Psoas muscle (tissue), 8 donors: ENCODE measurements at regions of chr11 and their contacts with region 1.

Region 1: DNA sequence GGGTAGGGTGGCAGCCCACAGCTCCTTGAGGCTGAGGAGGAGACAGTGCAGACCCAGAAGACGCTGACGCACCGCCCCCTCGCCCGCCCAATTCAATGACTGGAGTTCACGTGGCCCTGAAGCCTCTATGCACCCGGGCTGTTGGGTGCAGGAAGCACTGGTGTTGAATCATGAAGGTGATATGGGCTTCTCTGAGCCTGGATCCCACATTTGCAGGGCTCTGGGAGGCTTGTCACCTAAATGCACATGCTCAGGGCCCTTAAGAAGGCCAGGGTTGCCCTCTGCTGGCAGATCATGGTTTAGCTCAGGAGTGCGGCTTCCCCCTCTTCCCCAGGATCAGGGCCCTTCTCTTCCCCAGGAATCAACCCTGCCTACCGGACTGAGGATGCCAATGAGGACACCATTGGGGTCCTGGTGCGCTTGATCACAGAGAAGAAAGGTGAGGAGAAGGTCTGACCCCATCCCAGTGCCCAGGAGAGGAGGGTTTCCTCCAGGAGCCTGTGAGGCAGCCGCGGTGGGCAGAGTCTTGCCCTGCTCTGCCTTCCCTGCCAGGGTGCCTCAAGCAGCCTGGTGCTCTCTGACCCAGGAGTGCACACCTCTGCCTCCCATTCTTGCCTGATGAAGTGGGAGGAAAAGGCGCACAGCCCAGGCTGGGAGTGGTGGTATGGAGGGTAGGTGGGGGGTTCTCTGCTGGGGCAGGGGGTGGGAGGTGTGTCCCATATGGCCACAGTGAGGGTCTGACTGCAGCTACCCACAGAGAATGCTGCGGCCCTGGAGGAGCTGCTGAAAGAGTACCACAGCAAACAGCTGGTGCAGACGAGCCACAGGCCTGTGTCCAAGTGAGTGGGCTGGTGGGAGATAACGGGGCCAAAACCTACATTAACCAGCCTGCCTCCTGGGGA is 17.5 kb downstream of the RELT start:
- DNase-seq: peak; percentile 74 to 87
- ATAC-seq: peak; percentile 65 to 83 (median 78)
- H3K4me3 ChIP-seq: no peak overlapping the region
- H3K27ac ChIP-seq: no peak overlapping the region
- H3K4me1 ChIP-seq: peaks cover 37% of the 10 kb centered on the region
- H3K27me3 ChIP-seq: no peaks in the 10 kb centered on the region
- CTCF ChIP-seq: peak; percentile 81

Region 2: DNA sequence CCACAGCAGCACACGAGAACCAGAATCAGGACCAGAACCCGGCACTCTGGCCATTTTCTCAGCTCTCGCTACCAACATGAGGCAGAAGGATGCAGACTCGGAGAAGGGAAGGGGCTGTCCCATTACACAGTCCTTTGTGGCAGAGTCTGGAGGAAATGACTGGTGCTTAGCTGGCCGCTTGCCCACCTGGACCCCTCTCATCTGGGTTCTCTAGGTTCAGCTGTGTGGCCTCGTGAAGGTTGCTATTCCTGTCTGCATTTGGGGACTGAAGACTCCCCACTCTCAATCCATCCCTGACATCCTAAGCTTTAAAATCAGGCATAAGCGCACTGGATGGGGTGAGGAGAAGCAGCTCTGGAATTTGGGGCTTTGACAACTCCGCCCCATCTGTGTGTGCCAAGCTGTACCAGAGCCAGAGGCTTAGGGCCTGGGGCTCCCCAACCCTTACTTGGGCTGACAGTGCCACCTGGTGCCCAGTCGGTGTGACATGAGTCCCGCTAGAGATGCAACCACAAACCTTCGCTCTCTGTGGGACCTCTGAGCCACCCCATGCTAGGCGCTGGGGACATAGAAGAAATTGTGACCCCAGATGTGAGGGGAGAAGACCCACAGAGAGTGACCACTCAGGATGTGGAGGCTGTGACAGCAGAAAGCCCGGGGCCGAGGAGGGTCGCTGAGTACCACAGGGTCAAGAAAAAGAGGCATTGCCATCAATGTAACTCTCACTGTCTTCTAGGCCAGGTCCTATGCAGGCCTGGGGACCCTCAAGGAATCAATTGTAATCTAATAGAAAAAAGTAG is 215.8 kb before region 1 on chr11:
- intact Hi-C with region 1: no loop called
- DNase-seq: peak; percentile 79 to 90
- ATAC-seq: peak; percentile 72 to 86 (median 84)
- H3K4me3 ChIP-seq: no peak overlapping the region
- H3K27ac ChIP-seq: peak overlapping the region; percentile 50
- H3K4me1 ChIP-seq: peaks cover 14% of the 10 kb centered on the region
- H3K27me3 ChIP-seq: no peaks in the 10 kb centered on the region
- CTCF ChIP-seq: peak; percentile 82

Region 3: DNA sequence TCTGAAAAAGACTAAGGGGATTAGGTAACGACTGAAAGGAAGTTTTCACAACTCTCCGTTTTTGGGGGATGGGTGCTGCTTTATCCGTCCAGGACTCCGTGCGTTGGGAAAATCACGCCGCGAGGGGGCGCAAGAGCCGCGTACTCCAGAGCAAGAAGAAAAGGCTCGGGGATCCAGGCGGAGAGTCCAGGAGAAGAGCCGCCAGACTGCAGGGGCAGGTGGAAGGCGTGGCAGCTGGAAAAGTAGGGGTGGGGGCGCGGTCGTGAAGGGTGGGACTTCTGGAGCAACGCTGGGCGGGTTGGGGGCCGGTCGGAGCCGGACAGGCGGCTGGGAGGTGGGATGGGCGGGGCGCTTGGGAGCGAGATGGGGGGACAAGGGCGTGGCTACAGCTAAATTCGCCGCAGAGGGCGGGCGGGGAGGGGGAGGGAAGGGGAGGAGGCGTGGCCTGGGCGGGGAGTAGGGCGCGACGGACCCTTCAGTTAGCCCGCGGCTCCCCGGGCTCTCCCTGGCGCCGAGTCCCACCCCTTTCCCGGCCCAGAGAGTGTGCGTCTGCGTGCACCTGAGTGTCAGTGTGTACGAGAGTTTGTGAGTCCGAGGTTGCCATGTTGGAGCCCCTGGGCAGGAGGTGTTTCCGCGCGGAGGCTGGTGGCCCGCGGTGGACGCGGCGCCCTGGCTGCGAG is 86.3 kb before region 1 on chr11:
- intact Hi-C with region 1: loop called in 1 of 2 experiments (anchors 2 kb)
- DNase-seq: peak; percentile 97 to 98
- ATAC-seq: peak; percentile 64 to 88 (median 76)
- H3K4me3 ChIP-seq: peak overlapping the region; percentile 80
- H3K27ac ChIP-seq: peak overlapping the region; percentile 82
- H3K4me1 ChIP-seq: peaks cover 9% of the 10 kb centered on the region
- H3K27me3 ChIP-seq: peaks cover 0 to 5% (median 4%) of the 10 kb centered on the region in 3 donors
- CTCF ChIP-seq: peak; percentile 75

Region 4: DNA sequence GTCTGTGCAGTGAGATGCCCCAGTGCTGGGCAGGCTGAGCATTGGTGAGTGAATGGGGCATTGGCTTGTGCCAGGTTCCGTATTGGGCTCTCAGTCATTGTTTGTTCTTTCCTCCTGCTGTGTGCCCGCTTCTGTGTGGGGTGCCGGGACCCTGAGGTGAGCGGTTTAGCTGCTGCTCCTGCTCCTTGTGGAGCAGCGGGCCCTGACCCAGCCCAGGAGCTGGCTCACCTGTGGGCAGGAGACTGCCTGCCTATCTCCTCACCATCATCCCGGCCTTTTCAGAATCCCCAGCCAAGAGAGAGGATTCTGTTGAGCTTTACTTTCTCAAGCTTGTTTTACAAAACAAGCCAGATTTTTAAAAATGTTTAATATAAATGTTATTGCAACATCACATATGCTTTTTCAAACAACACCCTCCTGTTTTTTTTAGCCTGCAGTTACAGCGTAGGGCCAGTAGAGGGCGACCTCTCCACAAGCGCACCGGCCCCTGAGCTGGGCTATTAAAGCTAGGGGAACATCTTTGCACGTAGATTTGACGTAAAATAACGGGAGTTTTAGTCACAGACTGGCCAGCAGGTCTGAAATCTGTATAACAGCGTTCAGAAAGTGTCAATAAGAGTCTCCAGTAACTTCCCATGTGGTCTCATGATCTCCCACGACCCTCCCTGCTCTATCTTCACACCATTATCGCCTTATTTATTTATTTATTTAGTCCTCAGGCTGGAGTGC is 42.7 kb before region 1 on chr11:
- intact Hi-C with region 1: loop called (anchors 1 to 2 kb)
- DNase-seq: no peak
- ATAC-seq: peak; percentile 56 to 86 (median 75)
- H3K4me3 ChIP-seq: no peak overlapping the region
- H3K27ac ChIP-seq: no peak overlapping the region
- H3K4me1 ChIP-seq: peaks cover 4% of the 10 kb centered on the region
- H3K27me3 ChIP-seq: no peaks in the 10 kb centered on the region
- CTCF ChIP-seq: peak; percentile 99